PC-9 (cell line): ENCODE measurements at regions of chr1 and their contacts with region 1.

Region 1: GRCh38 chr1:233394860-233395717 is 67.6 kb downstream of the MAP3K21 start:
- DNase-seq: peak; percentile 30 to 60
- H3K4me3 ChIP-seq: no peak overlapping the region
- H3K27ac ChIP-seq: no peak overlapping the region
- H3K4me1 ChIP-seq: no peaks in the 10 kb centered on the region
- H3K27me3 ChIP-seq: no peaks in the 10 kb centered on the region
- CTCF ChIP-seq: peak; percentile 89

Region 2: GRCh38 chr1:233998891-233999290 is 603.8 kb after region 1 on chr1:
- CTCF ChIA-PET with region 1: interaction called, 11 read pairs
- POLR2A ChIA-PET with region 1: no interaction called
- intact Hi-C with region 1: no loop called
- DNase-seq: no peak
- H3K4me3 ChIP-seq: no peak overlapping the region
- H3K27ac ChIP-seq: no peak overlapping the region
- H3K4me1 ChIP-seq: peaks cover 18% of the 10 kb centered on the region
- H3K27me3 ChIP-seq: no peaks in the 10 kb centered on the region
- CTCF ChIP-seq: no peak

Region 3: DNA sequence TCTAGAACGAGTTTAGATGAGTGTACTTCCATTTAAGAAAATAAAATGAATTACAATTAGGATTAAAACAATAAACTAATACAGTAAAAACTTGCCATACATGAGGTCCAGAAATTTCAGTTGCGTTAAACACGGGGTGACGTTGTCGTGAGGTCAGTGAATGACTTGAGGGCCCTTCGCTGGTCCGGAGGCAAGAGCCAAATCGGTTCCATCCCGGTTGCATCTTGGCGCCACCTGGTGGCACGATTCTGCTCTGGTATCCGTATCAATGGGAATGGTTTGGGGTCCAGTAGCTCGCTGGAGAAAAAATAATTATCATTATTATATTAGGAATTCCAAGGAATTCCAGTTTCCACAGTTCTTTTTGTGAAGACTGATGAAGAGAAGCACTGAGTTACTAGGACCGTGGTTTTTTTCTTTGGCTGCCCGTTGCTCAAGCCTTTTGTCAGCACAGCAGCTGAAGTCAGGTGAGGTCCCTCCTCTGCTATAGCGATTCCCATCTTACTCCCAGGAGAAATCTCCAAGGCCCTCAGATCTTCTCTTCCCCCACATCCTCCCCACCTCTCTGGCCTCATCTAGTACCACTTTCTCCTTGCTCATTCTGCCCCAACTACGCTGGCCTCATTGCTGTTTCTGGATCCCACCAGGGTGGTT is 670.8 kb after region 1 on chr1:
- CTCF ChIA-PET with region 1: interaction called, 3 read pairs
- POLR2A ChIA-PET with region 1: no interaction called
- intact Hi-C with region 1: loop called (anchors 1 kb)
- DNase-seq: peak in 1 of 2 experiments; percentile 75
- H3K4me3 ChIP-seq: no peak overlapping the region
- H3K27ac ChIP-seq: no peak overlapping the region
- H3K4me1 ChIP-seq: no peaks in the 10 kb centered on the region
- H3K27me3 ChIP-seq: no peaks in the 10 kb centered on the region
- CTCF ChIP-seq: peak; percentile 83

Region 4: GRCh38 chr1:234309598-234310459 is 914.7 kb after region 1 on chr1:
- CTCF ChIA-PET with region 1: no interaction called
- POLR2A ChIA-PET with region 1: no interaction called
- intact Hi-C with region 1: loop called (anchors 5 kb)
- DNase-seq: peak; percentile 58 to 67
- H3K4me3 ChIP-seq: no peak overlapping the region
- H3K27ac ChIP-seq: no peak overlapping the region
- H3K4me1 ChIP-seq: peaks cover 2% of the 10 kb centered on the region
- H3K27me3 ChIP-seq: no peaks in the 10 kb centered on the region
- CTCF ChIP-seq: peak; percentile 92